ENCODE measurements at regions of chr15 and their contacts with region 1.

Region 1: DNA sequence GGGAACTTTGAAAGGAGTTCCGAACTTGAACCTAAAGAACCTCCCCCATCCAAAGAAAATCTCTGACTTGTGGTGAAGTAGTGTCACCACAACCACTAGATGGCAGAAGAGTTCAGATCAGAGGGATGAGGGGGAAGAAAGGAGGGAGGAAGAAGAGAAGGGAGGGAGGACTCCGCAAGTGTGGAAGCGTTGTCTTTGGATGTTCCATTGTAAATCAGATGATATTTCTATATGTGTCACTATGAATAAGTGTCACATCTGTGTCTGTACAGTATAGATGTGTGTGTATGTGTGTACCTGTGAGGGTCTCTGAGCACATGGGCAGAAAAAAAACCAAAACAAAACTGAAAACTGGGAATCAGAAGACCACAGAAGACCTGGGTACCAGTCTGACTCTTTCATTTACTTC is 16.9 kb downstream of the SLC24A1 start:
- DNase-seq: no peak
- H3K4me3 ChIP-seq: no peak overlapping the region
- H3K27ac ChIP-seq: no peak overlapping the region
- H3K4me1 ChIP-seq: peaks cover 0 to 3% (median 0%) of the 10 kb centered on the region in 4 experiments; a peak in 1 of 7 replicates
- H3K27me3 ChIP-seq: no peaks in the 10 kb centered on the region; a peak in 1 of 7 replicates
- CTCF ChIP-seq: peak; percentile 21 to 90 (median 80)
- EP300 ChIP-seq: no peak
- POLR2A ChIP-seq: no peak
- RAD21 ChIP-seq: peak; percentile 85 to 91

Region 2: DNA sequence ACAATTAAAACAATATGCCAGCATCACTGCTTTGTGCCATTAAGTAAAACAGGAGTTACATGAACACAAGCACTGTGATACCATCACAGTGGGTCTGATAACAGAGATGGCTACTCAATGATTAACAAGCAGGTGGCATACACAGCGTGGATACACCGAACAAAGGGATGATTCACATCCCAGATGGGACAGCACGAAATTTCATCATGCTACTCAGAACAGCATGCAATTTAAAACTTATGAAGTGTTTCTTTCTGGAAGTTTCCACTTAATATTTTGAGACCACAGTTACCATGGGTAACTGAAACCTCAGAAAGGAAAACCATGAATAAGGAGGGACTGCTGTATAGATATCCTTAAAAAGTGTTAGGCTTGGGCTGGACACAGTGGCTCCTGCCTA is 27.6 kb after region 1 on chr15:
- CTCF ChIA-PET with region 1: interaction called, 10 read pairs
- POLR2A ChIA-PET with region 1: no interaction called
- DNase-seq: no peak
- H3K4me3 ChIP-seq: no peak overlapping the region
- H3K27ac ChIP-seq: no peak overlapping the region
- H3K4me1 ChIP-seq: no peaks in the 10 kb centered on the region
- H3K27me3 ChIP-seq: no peaks in the 10 kb centered on the region; a peak in 1 of 7 replicates
- CTCF ChIP-seq: no peak
- EP300 ChIP-seq: no peak
- POLR2A ChIP-seq: no peak
- RAD21 ChIP-seq: no peak

Region 3: GRCh38 chr15:65832549-65833364 is 194.1 kb after region 1 on chr15:
- CTCF ChIA-PET with region 1: interaction called, 134 read pairs
- POLR2A ChIA-PET with region 1: no interaction called
- DNase-seq: peak; percentile 74 to 78
- H3K4me3 ChIP-seq: peak overlapping the region in 1 of 4 experiments; percentile 40; a peak in 2 of 8 replicates
- H3K27ac ChIP-seq: peak overlapping the region; percentile 78
- H3K4me1 ChIP-seq: peaks cover 4 to 23% (median 7%) of the 10 kb centered on the region in 4 experiments; a peak in 6 of 7 replicates
- H3K27me3 ChIP-seq: no peaks in the 10 kb centered on the region
- CTCF ChIP-seq: peak in 1 of 3 experiments; percentile 14; a peak in 1 of 4 replicates
- EP300 ChIP-seq: peak in 1 of 2 experiments; percentile 68; a peak in 1 of 3 replicates
- POLR2A ChIP-seq: peak; percentile 18 to 61
- RAD21 ChIP-seq: peak in 1 of 2 experiments; percentile 20; a peak in 1 of 4 replicates

Region 4: DNA sequence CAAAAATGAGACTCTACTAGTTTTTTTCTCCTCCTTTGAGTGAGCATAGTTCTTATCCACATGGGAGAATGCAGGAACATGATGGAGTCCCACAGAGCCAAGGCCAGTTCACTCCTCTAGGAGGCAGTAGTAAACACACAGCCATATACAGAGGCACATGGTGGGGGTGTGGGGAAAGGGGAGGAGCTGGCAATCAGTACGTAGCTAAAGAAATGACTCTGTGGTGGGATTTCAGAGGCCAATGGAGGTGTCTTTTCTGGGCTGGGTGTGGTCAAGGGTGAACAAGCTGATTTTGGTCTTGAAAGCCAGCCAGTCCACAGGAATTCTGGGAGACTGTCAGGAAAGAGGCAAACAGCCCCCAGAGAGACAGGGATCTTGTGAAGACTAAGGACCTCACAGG is 224.0 kb after region 1 on chr15:
- CTCF ChIA-PET with region 1: interaction called, 23 read pairs
- POLR2A ChIA-PET with region 1: interaction called, 3 read pairs
- DNase-seq: peak; percentile 69 to 76
- H3K4me3 ChIP-seq: no peak overlapping the region
- H3K27ac ChIP-seq: no peak overlapping the region
- H3K4me1 ChIP-seq: no peaks in the 10 kb centered on the region; a peak in 1 of 7 replicates
- H3K27me3 ChIP-seq: no peaks in the 10 kb centered on the region
- CTCF ChIP-seq: peak; percentile 58 to 82 (median 65)
- EP300 ChIP-seq: no peak
- POLR2A ChIP-seq: no peak
- RAD21 ChIP-seq: peak; percentile 26 to 49; a peak in 3 of 4 replicates